Activated B cell treated with CpG ODN at 0.5 μM for 24 hours (primary cell): ENCODE measurements at regions of chr12 and their contacts with region 1.

Region 1: DNA sequence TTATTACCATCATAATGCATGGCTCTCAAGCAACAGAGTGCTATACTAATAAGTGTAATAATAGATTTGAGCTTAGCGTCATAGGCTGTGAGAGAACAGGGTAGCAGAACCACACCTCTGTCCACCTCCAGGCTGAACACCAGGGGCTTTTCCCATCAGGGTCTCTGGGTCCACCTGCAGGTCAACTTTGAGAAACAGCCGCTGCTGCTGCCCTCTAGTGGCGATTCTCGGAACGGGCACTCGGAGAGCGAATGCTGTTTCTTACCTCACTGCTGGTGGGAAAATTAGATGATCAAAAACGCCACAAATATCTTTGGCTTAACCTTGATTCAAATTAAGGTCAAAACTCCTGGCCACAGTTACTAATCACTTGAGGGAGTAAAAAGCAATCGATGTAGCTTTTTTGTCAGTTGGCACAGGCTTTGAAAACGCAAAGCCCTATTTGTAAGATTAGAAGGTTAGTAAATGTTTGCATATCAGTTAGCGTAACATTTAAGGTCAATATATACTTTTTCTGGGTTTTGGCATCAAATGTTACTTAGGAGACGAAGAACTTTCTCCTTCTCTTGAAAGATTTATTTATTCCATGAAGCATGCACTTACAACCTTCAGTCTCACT is 127.9 kb upstream of the TMEM132D start:
- DNase-seq: peak; percentile 49
- ATAC-seq: no peak
- H3K4me3 Mint-ChIP-seq: no peak overlapping the region
- H3K27ac Mint-ChIP-seq: no peak overlapping the region
- H3K4me1 Mint-ChIP-seq: no peaks in the 10 kb centered on the region
- H3K27me3 Mint-ChIP-seq: peaks cover 4% of the 10 kb centered on the region
- CTCF ChIP-seq: peak; percentile 30

Region 2: DNA sequence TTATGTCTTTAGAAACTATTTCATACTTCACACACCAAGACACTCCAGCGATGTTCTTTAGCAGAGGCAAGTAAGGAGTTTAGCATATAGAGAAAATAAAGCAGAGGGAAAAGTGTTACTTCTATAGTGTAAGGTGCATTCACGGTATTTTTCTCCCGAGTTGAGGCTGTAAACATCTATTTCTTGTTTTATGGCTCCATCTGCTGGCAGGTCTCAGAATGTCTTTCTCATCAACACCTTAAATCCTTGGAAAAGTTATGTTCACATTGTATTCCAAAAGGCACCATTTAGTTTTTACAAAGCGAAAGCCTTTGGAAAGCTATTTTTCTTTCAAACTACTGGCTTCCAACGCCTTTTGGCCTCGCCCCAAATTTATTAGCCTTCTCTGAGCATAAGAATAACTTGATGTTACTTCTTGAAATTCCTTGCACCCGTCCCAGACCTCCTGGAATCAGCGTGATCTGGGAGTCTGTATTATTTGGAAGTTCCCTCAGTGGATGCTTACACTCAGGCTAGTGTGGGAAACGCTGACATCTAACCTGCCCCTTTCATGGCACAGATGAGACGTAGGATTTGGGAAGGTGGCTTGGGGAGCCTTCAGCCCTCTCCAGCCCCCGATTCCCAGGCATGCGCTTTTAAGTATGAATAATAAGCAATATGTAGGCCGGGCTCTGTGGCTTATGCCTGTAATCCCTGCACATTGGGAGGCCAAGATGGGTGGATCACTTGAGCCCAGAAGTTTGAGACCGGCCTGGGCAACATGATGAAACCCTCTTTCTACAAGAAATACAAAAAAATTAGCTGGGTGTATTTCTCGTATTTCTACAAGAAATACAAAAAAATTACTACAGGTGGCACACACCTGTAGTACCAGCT is 304.1 kb after region 1 on chr12:
- CTCF ChIA-PET with region 1: no interaction called
- POLR2A ChIA-PET with region 1: no interaction called
- intact Hi-C with region 1: loop called (anchors 5 kb)
- DNase-seq: no peak
- ATAC-seq: no peak
- H3K4me3 Mint-ChIP-seq: no peak overlapping the region
- H3K27ac Mint-ChIP-seq: no peak overlapping the region
- H3K4me1 Mint-ChIP-seq: no peaks in the 10 kb centered on the region
- H3K27me3 Mint-ChIP-seq: peaks cover 8% of the 10 kb centered on the region
- CTCF ChIP-seq: peak; percentile 39